ENCODE measurements at regions of chr3 and their contacts with region 1.

Region 1: GRCh38 chr3:156189927-156190326 is 69.5 kb downstream of the KCNAB1 start:
- DNase-seq: no peak
- ATAC-seq: no peak
- H3K4me3 ChIP-seq: no peak overlapping the region
- H3K27ac ChIP-seq: no peak overlapping the region
- H3K4me1 ChIP-seq: peaks cover 4% of the 10 kb centered on the region; the same call in 1 of the 2 replicates
- H3K27me3 ChIP-seq: no peaks in the 10 kb centered on the region
- CTCF ChIP-seq: no peak

Region 2: DNA sequence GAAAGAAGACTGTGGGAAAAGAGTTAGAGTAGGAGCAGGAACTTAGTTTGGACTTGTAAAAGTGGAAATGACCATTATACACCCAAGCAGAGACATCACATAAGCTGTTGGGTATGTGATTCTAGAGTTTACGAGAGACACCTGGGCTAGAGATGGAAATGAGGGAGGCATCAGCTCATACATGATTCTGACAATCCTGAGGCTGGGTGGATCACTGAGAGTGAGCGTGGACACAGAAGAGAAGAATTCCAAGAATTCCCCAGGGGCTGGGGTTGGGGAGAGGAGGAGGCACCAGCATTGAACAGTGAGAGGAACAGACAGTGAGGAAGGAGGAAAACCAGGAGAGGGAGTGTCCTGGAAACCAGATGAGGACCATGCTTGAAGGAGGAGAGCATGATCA is 43.9 kb after region 1 on chr3:
- CTCF ChIA-PET with region 1: no interaction called
- POLR2A ChIA-PET with region 1: no interaction called
- intact Hi-C with region 1: no loop called
- DNase-seq: no peak
- ATAC-seq: no peak
- H3K4me3 ChIP-seq: no peak overlapping the region
- H3K27ac ChIP-seq: no peak overlapping the region
- H3K4me1 ChIP-seq: no peaks in the 10 kb centered on the region
- H3K27me3 ChIP-seq: peaks cover 25% of the 10 kb centered on the region
- CTCF ChIP-seq: no peak

Region 3: DNA sequence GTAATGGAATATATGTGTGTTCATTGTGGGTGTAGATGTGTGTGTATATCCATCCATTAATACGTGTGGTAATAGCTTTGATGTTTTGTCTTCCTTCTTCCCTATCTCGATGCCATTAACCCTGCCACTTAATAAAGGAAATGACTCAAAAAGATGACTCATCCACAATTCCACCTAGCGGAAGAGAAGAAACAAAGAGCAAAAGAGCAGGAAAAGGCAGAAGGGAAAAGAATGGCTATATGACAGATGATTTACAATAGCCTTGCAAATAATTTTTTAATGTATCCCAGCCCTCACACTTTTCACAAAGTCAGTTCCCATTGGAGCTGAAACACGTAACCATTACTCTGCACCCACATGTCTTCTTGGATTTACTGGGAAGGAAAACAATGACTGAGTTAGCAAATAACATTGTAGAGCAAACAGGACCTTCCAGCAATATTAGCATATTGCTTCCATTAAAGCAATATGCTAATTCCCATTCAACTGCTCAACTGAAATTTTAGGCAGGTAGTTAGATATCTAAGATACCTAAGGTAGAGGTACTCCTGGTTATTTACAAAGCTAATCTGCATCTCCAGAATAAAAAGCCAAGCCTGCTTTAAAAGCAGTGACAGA is 127.6 kb after region 1 on chr3:
- CTCF ChIA-PET with region 1: no interaction called
- POLR2A ChIA-PET with region 1: no interaction called
- intact Hi-C with region 1: loop called (anchors 10 kb)
- DNase-seq: peak; percentile 87
- ATAC-seq: peak; percentile 91
- H3K4me3 ChIP-seq: no peak overlapping the region
- H3K27ac ChIP-seq: peak overlapping the region; percentile 68
- H3K4me1 ChIP-seq: peaks cover 17% of the 10 kb centered on the region
- H3K27me3 ChIP-seq: no peaks in the 10 kb centered on the region
- CTCF ChIP-seq: no peak

Measured in PC-3 (cell line).